ENCODE measurements at regions of chr7 and their contacts with region 1.

Region 1: DNA sequence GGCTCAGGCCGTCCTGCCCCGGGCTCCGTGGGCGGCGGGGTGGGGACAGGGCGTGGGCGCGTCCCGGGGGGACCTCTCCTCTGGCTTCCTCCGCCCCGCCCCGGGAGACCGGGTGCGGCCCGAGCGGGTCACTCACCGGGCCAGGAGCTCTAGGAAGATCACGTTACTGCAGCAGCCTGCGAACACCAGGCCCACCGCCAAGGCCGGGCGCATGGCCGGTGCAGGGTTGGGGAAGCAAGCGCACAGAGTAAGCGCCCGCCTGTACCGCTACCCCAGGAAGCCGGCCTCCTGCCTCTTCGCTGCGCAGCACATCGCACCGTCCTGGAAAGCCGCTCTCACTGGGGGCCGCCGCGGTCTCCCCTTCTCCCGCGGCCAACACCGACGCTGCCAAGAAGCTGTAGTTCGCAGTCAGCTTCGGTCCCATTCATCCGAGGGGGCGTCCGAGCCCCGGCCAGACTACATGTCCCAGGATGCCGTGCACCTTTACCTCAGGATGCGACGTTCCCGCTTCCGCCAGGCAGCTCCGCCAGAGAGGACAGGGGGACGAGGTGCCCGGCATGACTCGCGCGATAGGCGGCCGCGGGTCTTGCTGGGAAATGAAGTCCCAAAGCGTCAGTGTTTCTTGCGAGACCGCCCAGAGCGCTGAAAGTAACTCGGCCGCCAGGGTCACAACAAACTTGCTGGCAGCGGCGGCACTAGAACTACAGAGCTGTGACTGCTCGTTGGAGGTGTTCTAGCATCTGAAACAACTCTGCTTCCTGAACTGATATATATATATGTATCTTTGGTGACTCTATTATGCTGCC is at the start of gene SLC35B4:
- DNase-seq: peak; percentile 91 to 98
- H3K4me3 ChIP-seq: peak within 1 kb of the TSS; percentile 89 to 96
- H3K27ac ChIP-seq: peak within 1 kb of the TSS; percentile 67 to 74
- H3K4me1 ChIP-seq: peaks cover 0 to 6% of the 10 kb centered on the region in 2 donors
- H3K27me3 ChIP-seq: no peaks in the 10 kb centered on the region
- CTCF ChIP-seq: peak in 1 of 3 experiments; percentile 22
- total RNA-seq, gene SLC35B4: 5.3 TPM

Region 2: DNA sequence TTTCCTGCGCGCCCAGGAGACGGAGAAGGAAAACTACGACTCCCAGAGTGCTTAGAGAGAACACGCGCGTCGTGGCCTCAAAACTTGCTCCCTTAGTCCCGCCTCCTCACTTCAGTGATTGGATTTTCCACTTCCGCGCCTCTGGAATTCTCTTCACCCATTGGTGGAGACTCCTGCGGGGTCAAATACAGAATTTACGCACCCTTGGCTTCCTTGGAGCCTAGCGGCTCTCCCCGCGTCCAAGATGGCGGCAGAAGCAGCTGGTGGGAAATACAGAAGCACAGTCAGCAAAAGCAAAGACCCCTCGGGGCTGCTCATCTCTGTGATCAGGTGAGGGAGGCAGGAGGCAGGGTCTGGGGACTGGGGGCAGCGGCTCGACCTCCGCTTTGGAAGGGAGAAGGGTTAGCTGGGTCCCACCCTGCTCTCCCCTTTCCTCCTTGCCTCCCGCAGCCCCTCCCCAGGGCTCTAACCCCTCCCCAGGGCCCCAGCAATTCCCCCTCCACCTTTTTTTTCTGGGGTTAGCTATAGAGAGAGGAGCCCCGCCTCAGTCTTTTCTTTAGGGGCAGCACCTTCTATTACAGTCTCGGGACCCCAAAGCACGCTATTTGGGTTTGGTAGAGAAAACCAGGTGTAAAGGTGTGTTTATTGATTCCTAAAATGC is 1063.8 kb before region 1 on chr7 and contains the start of gene EXOC4:
- intact Hi-C with region 1: loop called (anchors 5 kb)
- DNase-seq: peak; percentile 69 to 96
- H3K4me3 ChIP-seq: peak within 1 kb of the TSS; percentile 87 to 99
- H3K27ac ChIP-seq: peak within 1 kb of the TSS; percentile 81 to 85
- H3K4me1 ChIP-seq: peaks cover 0 to 2% of the 10 kb centered on the region in 2 donors
- H3K27me3 ChIP-seq: no peaks in the 10 kb centered on the region
- CTCF ChIP-seq: no peak
- total RNA-seq, gene EXOC4: 27.1 TPM

Region 3: GRCh38 chr7:134254311-134254710 is 62.4 kb before region 1 on chr7:
- intact Hi-C with region 1: no loop called
- DNase-seq: no peak
- H3K4me3 ChIP-seq: no peak overlapping the region
- H3K27ac ChIP-seq: no peak overlapping the region
- H3K4me1 ChIP-seq: no peaks in the 10 kb centered on the region
- H3K27me3 ChIP-seq: no peaks in the 10 kb centered on the region
- CTCF ChIP-seq: no peak

Region 4: GRCh38 chr7:134432296-134433152 is 115.8 kb after region 1 on chr7:
- intact Hi-C with region 1: loop called (anchors 5 kb)
- DNase-seq: peak; percentile 65 to 93
- H3K4me3 ChIP-seq: peak overlapping the region; percentile 32 to 61
- H3K27ac ChIP-seq: peak overlapping the region; percentile 63 to 81
- H3K4me1 ChIP-seq: no peaks in the 10 kb centered on the region
- H3K27me3 ChIP-seq: no peaks in the 10 kb centered on the region
- CTCF ChIP-seq: peak; percentile 56 to 89 (median 71)

Region 5: DNA sequence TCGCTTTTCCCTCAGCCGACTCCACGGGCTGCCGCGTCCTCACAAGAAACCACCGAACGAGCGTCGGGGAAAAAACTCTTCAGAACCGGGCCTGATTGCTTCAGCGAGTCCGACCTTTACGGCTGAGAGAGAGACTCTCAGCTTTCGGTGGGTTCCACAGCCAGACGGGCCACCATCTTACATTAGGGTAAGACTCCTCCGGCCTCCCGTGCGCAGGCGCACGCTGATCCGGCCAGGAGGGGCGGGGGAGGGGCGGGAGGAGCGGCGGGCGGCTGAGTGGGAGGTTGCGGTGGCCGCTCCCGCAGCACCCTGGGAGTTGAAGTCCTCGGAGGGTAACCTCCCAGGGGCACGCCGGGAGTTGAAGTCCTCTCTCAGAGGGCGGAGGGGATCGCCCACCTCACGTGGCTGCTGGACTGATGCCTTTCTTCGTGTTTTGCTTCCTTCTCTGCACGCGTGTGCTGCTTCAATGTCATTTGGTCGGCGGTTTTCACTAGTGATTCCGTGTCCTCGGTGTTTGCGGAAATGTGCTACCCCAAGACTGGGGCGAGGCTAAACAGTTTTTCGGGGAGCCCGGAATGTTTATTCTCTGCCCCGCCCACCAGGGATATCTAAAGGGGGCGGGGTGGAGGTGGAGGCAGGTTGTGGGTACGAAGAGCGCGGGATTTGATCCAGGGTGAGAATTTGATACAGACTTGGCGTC is 1193.3 kb after region 1 on chr7 and contains the start of gene CNOT4:
- intact Hi-C with region 1: loop called (anchors 5 kb)
- DNase-seq: peak; percentile 91 to 98
- H3K4me3 ChIP-seq: peak within 1 kb of the TSS; percentile 66 to 83
- H3K27ac ChIP-seq: peak within 1 kb of the TSS; percentile 86 to 95
- H3K4me1 ChIP-seq: peaks cover 0 to 23% of the 10 kb centered on the region in 2 donors
- H3K27me3 ChIP-seq: no peaks in the 10 kb centered on the region
- CTCF ChIP-seq: no peak
- total RNA-seq, gene CNOT4: 14.8 TPM